Activated CD4-positive, alpha-beta T cell treated with anti-CD3 and anti-CD28 coated beads, Interleukin-2, amount 10 ng/mL, durations not matched to agents 24 days and 14 days (primary cell): ENCODE measurements at regions of chr3 and their contacts with region 1.

Region 1: DNA sequence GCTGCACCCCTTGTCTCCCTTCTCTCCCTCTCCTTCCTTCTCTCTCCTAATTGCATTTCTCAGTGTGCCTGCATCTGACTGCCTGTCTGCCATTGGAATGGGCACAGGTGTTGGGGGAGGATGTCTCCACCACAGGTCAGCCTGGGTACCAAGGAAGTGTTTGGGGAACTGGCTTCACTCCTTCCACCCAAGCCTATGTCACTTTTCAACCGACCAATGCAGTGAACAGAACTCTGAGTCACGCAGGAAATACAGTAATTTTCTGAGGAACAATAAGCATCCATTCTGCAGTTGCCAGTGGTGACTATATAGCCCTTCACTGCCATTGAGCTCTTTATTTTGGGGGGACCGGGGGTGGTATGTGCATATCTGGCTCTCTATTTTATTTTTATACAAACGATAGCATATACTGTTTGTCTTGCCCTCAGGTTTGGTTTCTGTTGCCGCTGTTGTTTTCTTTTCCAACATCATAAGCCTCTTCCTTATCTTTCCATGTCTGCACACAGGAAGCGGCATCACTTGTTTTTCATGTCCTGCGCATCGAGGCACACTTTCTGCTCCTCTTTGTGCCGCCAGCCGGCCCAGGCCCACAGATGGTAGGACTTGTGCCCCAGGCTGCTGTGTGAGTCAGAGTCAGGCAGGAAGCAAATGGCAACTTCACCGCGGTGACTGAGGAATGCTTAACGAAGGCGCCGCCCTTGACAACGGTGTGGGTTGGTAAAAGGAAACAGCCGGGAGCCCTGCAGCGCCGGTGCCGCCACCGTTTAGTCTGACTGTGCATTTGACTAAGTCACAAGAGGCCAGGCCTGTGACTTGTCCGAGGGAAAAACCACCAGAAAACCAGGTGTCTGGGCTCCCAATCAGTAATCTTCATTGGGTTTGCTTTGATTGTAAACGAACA is 21.1 kb upstream of the CDCP1 start:
- DNase-seq: peak; percentile 95
- H3K4me3 Mint-ChIP-seq: peak overlapping the region; percentile 76
- H3K27ac Mint-ChIP-seq: peak overlapping the region; percentile 96
- H3K4me1 Mint-ChIP-seq: peaks cover 41% of the 10 kb centered on the region
- H3K27me3 Mint-ChIP-seq: peaks cover 6% of the 10 kb centered on the region

Region 2: DNA sequence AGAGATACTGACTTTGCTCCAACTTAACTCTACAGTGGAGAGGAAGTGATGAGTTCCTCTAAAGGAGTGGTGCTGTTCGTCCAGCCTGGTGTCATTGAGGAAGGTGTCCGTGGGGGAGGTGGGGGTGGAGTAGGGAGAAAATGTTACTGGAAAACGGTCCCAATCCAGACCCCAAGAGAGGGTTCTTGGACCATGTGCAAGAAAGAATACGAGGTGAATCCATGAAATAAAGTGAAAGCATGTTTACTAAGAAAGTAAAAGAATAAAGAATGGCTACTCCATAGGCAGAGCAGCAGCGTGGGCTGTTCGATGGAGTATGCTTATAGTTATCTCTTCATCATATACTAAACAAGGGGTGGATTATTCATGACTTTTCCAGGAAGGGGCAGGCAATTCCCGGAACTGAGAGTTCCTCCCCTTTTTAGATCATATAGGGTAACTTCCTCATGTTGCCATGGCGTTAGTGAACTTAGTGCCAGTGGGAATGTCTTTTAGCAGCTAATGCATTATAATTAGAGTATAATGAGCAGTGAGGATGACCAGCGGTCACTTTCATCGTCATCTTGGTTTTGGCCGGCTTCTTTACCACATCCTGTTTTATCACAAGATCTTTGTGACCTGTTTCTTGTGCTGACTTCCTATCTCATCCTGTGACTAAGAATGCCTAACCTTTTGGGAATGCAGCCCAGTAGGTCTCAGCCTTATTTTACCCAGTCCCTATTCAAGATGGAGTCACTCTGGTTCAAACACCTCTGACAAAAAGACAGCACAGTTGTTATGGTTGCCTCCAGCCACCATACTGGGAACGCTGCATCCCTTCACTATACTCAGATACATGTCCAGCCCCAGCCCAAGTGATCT is 102.5 kb before region 1 on chr3:
- intact Hi-C with region 1: loop called (anchors 1 kb)
- DNase-seq: peak; percentile 90
- H3K4me3 Mint-ChIP-seq: peak overlapping the region; percentile 57
- H3K27ac Mint-ChIP-seq: peak overlapping the region; percentile 87
- H3K4me1 Mint-ChIP-seq: peaks cover 33% of the 10 kb centered on the region
- H3K27me3 Mint-ChIP-seq: peaks cover 9% of the 10 kb centered on the region

Region 3: DNA sequence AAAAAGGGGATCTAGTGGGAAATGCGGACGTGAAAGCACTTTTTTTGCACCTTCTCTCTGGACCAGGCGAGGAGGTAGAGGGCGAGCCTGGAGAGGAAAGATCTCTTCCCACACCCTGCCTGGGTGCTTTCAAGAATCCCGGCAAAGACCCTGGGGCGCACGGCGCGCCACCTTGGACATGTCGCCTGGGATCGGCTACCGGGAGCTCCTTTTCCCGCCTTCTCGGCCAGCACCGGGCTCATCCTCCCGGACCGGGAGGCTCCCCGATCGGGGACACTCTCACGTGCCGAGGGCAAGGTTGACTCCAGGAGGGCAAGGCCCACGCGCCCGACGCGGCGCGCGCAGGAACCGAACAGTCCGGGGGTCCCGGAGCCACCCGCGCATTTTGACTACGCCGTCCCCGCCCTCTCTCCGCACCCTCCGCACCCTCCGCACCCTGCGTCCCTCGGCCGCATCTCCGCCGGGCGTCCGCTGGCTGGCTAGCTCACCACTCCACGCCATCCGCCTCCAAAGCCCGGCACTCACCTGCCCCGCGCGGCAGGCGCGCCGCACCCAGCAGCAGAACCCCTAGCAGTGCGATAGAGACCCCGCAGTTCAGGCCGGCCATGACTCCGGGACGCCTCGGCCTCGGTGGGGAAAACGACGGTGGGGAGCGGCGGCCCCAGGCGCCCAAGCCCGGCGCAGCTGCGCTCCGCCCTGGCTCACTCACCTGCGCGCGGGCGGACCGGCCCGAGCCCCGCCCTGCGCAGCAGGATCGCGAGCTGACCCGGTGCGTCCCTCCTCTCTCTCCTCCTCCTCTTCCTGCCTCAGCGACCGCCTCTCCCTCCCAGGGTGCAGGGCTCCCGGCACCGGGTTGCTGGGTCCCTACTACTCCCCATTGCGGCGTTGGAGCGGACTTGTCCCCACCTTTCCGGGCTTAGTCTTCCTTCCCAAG is 21.3 kb before region 1 on chr3 and contains the start of gene CDCP1:
- intact Hi-C with region 1: loop called (anchors 1 kb)
- DNase-seq: peak; percentile 71
- H3K4me3 Mint-ChIP-seq: peak within 1 kb of the TSS; percentile 79
- H3K27ac Mint-ChIP-seq: peak within 1 kb of the TSS; percentile 68
- H3K4me1 Mint-ChIP-seq: peaks cover 19% of the 10 kb centered on the region
- H3K27me3 Mint-ChIP-seq: peaks cover 70% of the 10 kb centered on the region
- total RNA-seq, gene CDCP1: 3.2 and 3.3 TPM in 2 replicates

Region 4: GRCh38 chr3:45205126-45205525 is 37.9 kb after region 1 on chr3:
- intact Hi-C with region 1: loop called (anchors 5 kb)
- DNase-seq: no peak
- H3K4me3 Mint-ChIP-seq: no peak overlapping the region
- H3K27ac Mint-ChIP-seq: no peak overlapping the region
- H3K4me1 Mint-ChIP-seq: peaks cover 13% of the 10 kb centered on the region
- H3K27me3 Mint-ChIP-seq: peaks cover 40% of the 10 kb centered on the region

Region 5: DNA sequence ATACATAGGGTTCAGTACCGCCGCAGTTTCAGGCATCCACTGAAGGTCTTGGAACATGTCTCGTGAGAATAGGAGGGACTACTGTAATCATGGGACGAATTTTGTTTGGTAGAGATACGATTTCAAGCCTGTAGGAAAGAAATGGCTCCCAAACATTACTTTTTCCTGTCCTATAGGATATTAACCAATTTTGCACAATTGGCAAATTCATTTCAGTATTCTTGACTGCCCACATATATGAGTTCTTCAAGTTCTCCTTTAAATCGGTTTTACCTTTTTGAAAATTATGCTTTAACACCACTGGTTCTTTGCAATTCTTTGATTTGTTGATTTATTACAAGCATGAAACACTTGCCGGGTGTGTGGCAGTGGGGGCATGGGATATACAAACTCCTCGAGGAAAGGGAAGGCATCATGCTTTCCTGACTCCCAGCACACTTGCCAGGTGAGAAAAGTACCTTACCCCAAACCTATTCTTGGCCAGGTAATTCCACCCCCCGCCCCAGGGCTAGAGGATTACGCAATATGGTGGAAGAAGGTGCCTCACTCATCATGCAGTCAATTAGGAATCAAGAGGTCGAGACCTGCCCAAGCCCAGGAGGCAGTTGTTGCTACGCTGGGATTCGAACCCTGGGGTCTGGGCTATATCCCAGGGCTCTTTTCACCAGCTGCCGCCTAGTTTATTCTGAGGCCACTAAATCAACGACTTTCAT is 220.5 kb after region 1 on chr3:
- intact Hi-C with region 1: no loop called
- DNase-seq: no peak
- H3K4me3 Mint-ChIP-seq: peak overlapping the region; percentile 94
- H3K27ac Mint-ChIP-seq: peak overlapping the region; percentile 49
- H3K4me1 Mint-ChIP-seq: peaks cover 16% of the 10 kb centered on the region
- H3K27me3 Mint-ChIP-seq: peaks cover 20% of the 10 kb centered on the region